ENCODE measurements at regions of chr7 and their contacts with region 1.

Region 1: GRCh38 chr7:31782411-31782991 is 95.5 kb downstream of the PPP1R17 start:
- DNase-seq: peak; percentile 50
- CTCF ChIP-seq: peak; percentile 63

Region 2: DNA sequence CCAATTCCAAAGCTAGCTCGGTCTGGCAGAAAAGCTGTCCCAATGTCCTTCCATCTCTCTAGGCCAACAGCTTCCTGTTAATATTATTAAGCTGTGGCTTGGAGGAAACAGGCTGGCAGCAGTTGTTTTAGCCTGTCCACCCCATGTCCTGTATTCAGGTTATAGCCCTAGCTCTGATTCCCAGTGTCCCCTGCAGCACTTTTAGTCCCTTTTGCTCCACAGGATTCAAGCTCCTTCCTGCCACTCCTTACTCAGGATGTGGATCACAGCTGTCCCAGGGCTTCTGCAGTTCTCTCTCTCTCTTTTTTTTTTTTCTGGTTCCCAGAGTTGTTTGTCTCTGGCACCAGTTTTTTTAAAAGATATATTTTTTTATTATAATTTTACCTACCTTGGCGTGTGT is 10.3 kb before region 1 on chr7:
- CTCF ChIA-PET with region 1: interaction called, 11 read pairs
- POLR2A ChIA-PET with region 1: no interaction called
- DNase-seq: no peak
- CTCF ChIP-seq: no peak

Region 3: DNA sequence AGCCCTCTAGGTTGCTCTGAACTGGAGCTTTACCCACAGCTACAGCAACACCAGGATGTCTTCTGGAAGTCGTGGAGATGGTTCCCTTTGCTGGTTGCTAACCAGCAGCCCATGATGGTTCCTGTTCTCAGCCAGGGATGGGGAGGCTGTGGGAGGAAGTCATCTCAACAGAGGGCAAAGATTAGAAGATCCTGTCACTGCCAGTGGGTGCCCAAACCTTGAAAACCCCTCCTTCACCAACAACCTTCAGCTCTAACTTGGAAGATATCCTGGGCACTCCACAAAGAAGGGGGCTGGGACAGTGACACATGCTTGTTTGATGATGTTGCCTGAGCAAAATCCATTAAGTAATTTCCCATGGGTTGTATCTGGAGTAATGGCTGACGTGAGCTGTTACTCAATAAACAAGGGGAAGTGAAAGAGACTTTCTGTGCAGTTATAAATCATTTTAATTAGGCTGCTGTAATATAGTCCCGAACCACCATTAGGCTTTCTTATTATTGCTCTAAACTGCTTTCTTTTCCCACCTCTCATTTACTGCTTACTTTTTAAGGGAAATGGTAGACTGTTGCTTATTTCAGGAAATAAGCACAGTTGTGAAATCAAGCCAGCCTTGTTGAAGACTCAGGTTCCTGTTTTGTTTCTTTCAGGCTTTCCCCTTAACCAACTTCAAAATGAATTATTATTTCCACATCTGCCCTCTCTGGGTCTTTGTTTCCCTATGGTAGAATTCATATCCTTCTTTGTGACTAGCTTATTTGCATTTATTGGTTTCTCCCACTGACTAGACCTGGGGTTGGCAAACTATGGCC is 29.4 kb after region 1 on chr7:
- CTCF ChIA-PET with region 1: interaction called, 10 read pairs
- POLR2A ChIA-PET with region 1: no interaction called
- DNase-seq: no peak
- CTCF ChIP-seq: no peak

Region 4: GRCh38 chr7:32062150-32062549 is 279.6 kb after region 1 on chr7:
- CTCF ChIA-PET with region 1: interaction called, 12 read pairs
- POLR2A ChIA-PET with region 1: no interaction called
- DNase-seq: peak; percentile 32
- CTCF ChIP-seq: peak; percentile 44

Measured in GM10248 (cell line).